T-cell (primary cell): ENCODE measurements at regions of chr22 and their contacts with region 1.

Region 1: GRCh38 chr22:23281406-23282088 is 101.2 kb downstream of the BCR start:
- DNase-seq: peak; percentile 50 to 89 (median 75)
- ATAC-seq: peak; percentile 78 to 82 (median 78)
- H3K4me3 ChIP-seq: no peak overlapping the region
- H3K4me3 Mint-ChIP-seq: no peak overlapping the region
- H3K27ac ChIP-seq: no peak overlapping the region
- H3K27ac Mint-ChIP-seq: no peak overlapping the region
- H3K4me1 ChIP-seq: peaks cover 0 to 47% of the 10 kb centered on the region in 2 experiments
- H3K4me1 Mint-ChIP-seq: peaks cover 0 to 42% (median 24%) of the 10 kb centered on the region in 3 donors
- H3K27me3 ChIP-seq: no peaks in the 10 kb centered on the region
- H3K27me3 Mint-ChIP-seq: no peaks in the 10 kb centered on the region

Region 2: DNA sequence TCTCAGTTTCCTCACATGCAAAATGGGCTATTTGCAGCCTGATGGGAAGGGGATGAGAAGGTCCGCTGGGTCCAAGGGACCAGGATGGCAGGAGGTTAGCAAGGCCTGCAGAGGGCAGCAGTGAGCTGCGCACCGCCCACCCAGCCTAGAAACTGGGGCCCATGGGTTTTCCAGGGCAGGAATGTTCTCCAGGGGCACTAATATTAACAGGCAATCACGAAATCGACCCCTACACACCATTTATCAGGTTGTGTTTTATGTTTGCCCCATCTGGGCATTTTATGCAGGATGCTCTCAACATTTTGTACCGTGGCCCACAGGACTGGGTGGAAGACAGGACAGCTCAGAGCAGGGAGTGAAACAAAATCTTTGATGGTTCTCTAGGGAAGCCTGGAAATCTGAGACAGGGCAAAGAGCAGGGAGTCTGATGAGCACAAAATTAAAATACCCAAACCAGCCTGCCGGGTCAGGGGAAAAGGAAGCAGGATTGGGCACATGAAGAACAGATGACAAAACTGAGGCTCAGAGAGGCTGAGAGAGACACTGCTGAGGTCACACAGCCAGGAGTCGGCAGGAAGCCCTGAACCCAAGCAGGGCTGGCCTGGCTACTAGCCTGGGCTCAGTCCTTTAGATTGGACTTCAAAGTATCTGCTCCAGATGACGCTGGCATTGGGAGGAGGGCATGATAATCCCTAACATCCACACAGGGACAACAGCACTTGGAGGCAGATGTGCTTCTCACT is 102.9 kb before region 1 on chr22:
- CTCF ChIA-PET with region 1: interaction called, 8 to 43 read pairs
- POLR2A ChIA-PET with region 1: no interaction called
- DNase-seq: peak in 31 of 35 experiments; percentile 23 to 83 (median 54)
- ATAC-seq: peak in 1 of 4 experiments; percentile 25
- H3K4me3 ChIP-seq: no peak overlapping the region
- H3K4me3 Mint-ChIP-seq: peak overlapping the region; percentile 59 to 85 (median 84)
- H3K27ac ChIP-seq: peak overlapping the region; percentile 41
- H3K27ac Mint-ChIP-seq: peak overlapping the region; percentile 77 to 78
- H3K4me1 ChIP-seq: peaks cover 16 to 79% of the 10 kb centered on the region in 2 experiments
- H3K4me1 Mint-ChIP-seq: peaks cover 51 to 60% (median 56%) of the 10 kb centered on the region in 3 donors
- H3K27me3 ChIP-seq: peaks cover 0 to 2% of the 10 kb centered on the region in 2 experiments
- H3K27me3 Mint-ChIP-seq: no peaks in the 10 kb centered on the region

Region 3: GRCh38 chr22:23243006-23243573 is 38.5 kb before region 1 on chr22:
- CTCF ChIA-PET with region 1: interaction called, 3 to 15 read pairs
- POLR2A ChIA-PET with region 1: no interaction called
- DNase-seq: peak; percentile 28 to 85 (median 66)
- ATAC-seq: peak; percentile 91 to 96 (median 93)
- H3K4me3 ChIP-seq: peak overlapping the region; percentile 11 to 32
- H3K4me3 Mint-ChIP-seq: peak overlapping the region; percentile 62 to 80 (median 76)
- H3K27ac ChIP-seq: peak overlapping the region; percentile 74
- H3K27ac Mint-ChIP-seq: peak overlapping the region; percentile 88 to 99
- H3K4me1 ChIP-seq: peaks cover 33 to 93% of the 10 kb centered on the region in 2 experiments
- H3K4me1 Mint-ChIP-seq: peaks cover 83 to 94% (median 89%) of the 10 kb centered on the region in 3 donors
- H3K27me3 ChIP-seq: no peaks in the 10 kb centered on the region
- H3K27me3 Mint-ChIP-seq: no peaks in the 10 kb centered on the region

Region 4: GRCh38 chr22:23376256-23376655 is 94.7 kb after region 1 on chr22:
- CTCF ChIA-PET with region 1: no interaction called
- POLR2A ChIA-PET with region 1: no interaction called
- DNase-seq: peak in 13 of 35 experiments; percentile 6 to 39 (median 17)
- ATAC-seq: peak; percentile 36 to 44 (median 44)
- H3K4me3 ChIP-seq: no peak overlapping the region
- H3K4me3 Mint-ChIP-seq: no peak overlapping the region
- H3K27ac ChIP-seq: no peak overlapping the region
- H3K27ac Mint-ChIP-seq: no peak overlapping the region
- H3K4me1 ChIP-seq: no peaks in the 10 kb centered on the region
- H3K4me1 Mint-ChIP-seq: no peaks in the 10 kb centered on the region
- H3K27me3 ChIP-seq: peaks cover 0 to 10% of the 10 kb centered on the region in 2 experiments
- H3K27me3 Mint-ChIP-seq: peaks cover 0 to 3% of the 10 kb centered on the region in 2 donors